Dendritic cell treated with granulocyte-macrophage colony-stimulating factor and Interleukin-4, amounts not matched to agents 40 ng/mL and 50 ng/mL, for 4 days (primary cell): ENCODE measurements at regions of chr19 and their contacts with region 1.

Region 1: GRCh38 chr19:6372594-6373095 is at the start of gene ALKBH7:
- H3K4me3 Mint-ChIP-seq: peak within 1 kb of the TSS; percentile 95
- H3K27ac Mint-ChIP-seq: peak within 1 kb of the TSS; percentile 97
- H3K4me1 Mint-ChIP-seq: peaks cover 23% of the 10 kb centered on the region
- H3K27me3 Mint-ChIP-seq: no peaks in the 10 kb centered on the region

Region 2: DNA sequence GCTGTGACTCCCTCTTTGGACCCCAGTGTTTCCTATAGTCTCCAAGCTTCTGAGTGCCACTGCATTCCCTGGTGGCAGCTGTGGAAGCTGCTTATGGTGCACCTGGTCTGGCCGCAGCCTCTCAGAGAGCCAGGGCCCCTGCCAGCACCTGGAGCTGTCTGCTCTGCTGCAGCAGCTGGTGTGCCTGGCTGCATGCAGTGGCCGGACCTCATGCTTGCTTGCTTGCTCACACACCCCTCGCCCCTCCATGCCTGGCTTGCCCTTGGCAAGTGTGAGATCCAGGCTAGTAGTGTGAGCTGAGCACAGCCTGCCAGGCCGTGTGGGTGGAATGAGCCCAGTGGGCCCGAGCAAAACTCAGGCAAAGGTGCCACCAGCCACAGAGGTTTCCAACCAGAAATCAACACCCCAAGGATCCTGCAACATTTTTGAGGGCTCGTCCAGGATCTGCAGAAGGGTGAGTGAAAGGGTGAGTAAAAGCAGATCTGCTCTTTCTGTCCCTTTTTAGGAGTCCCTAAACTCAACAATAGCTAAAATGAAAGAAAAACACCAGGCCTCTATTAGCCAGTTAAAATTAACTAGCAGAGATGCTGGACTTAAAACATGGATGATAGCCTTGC is 85.3 kb before region 1 on chr19:
- intact Hi-C with region 1: no loop called
- H3K4me3 Mint-ChIP-seq: no peak overlapping the region
- H3K27ac Mint-ChIP-seq: no peak overlapping the region
- H3K4me1 Mint-ChIP-seq: no peaks in the 10 kb centered on the region
- H3K27me3 Mint-ChIP-seq: peaks cover 17% of the 10 kb centered on the region

Region 3: DNA sequence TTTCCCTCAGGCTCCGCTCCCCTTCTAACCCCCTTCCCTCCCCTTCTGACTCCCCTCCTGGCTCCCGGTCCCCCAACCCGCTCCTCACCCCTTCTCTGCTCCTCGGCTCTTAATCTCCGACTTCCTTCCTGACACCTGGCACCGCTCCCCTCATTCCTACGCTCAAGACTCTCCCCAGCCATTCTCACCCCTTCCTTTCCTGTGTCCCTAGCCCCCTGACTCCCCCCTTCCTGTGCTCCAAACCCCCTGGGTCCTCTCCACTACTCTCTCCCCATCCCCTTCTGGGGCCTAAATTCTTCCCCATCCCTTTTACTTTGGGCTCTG is 10.7 kb before region 1 on chr19:
- intact Hi-C with region 1: loop called (anchors 1 kb)
- H3K4me3 Mint-ChIP-seq: peak overlapping the region; percentile 89
- H3K27ac Mint-ChIP-seq: peak overlapping the region; percentile 78
- H3K4me1 Mint-ChIP-seq: peaks cover 10% of the 10 kb centered on the region
- H3K27me3 Mint-ChIP-seq: no peaks in the 10 kb centered on the region

Region 4: GRCh38 chr19:6393074-6393983 is 20.7 kb after region 1 on chr19 and contains the start of gene GTF2F1:
- intact Hi-C with region 1: loop called (anchors 1 kb)
- H3K4me3 Mint-ChIP-seq: peak within 1 kb of the TSS; percentile 97
- H3K27ac Mint-ChIP-seq: peak within 1 kb of the TSS; percentile 97
- H3K4me1 Mint-ChIP-seq: peaks cover 36% of the 10 kb centered on the region
- H3K27me3 Mint-ChIP-seq: no peaks in the 10 kb centered on the region

Region 5: GRCh38 chr19:6424939-6425731 is 52.5 kb after region 1 on chr19:
- intact Hi-C with region 1: loop called (anchors 5 kb)
- H3K4me3 Mint-ChIP-seq: peak overlapping the region; percentile 73
- H3K27ac Mint-ChIP-seq: peak overlapping the region; percentile 95
- H3K4me1 Mint-ChIP-seq: peaks cover 52% of the 10 kb centered on the region
- H3K27me3 Mint-ChIP-seq: peaks cover 4% of the 10 kb centered on the region